Right ventricle myocardium superior (tissue), 1 donor: ENCODE measurements at regions of chr20 and their contacts with region 1.

Region 1: GRCh38 chr20:8722276-8722928 is 346.5 kb upstream of the PLCB4 start:
- DNase-seq: no peak
- ATAC-seq: peak; percentile 87

Region 2: GRCh38 chr20:7935027-7935551 is 787.3 kb before region 1 on chr20:
- intact Hi-C with region 1: loop called (anchors 5 kb)
- DNase-seq: no peak
- ATAC-seq: no peak

Region 3: GRCh38 chr20:8043687-8044282 is 678.6 kb before region 1 on chr20:
- intact Hi-C with region 1: loop called (anchors 5 kb)
- DNase-seq: no peak
- ATAC-seq: peak; percentile 84

Region 4: GRCh38 chr20:8131598-8132483 is 590.6 kb before region 1 on chr20 and contains the start of gene PLCB1:
- intact Hi-C with region 1: loop called (anchors 2 kb)
- DNase-seq: peak; percentile 91
- ATAC-seq: peak; percentile 94
- total RNA-seq, gene PLCB1: 6.3 TPM

Region 5: GRCh38 chr20:8389381-8390036 is 332.9 kb before region 1 on chr20:
- intact Hi-C with region 1: loop called (anchors 10 kb)
- DNase-seq: no peak
- ATAC-seq: peak; percentile 70